ENCODE measurements at regions of chr12 and their contacts with region 1.

Region 1: DNA sequence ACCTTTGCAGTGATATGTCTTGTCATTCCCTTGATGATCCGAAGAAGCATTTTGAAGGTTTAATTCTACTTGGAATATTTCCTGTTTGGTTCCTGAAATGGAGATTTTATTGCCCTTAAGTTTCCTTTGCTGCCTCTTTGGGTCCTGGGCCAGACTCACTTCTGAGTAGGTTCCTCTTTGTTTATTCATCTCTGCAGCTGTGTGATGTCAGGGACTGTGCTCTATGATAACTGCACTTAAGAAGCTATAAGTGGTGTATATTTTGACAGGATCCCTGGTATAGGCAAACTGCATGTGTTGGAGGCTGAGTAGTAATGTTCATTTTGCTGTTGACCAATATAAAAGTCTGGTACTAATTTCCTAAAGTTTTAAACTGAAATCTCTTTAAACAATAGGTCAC is at the start of gene KLRC4:
- DNase-seq: peak in 1 of 2 donors; percentile 34
- ATAC-seq: peak; percentile 42 to 75 (median 61)
- H3K4me3 ChIP-seq: peak within 1 kb of the TSS; percentile 31
- H3K4me3 Mint-ChIP-seq: peak within 1 kb of the TSS; percentile 81
- H3K27ac ChIP-seq: peak within 1 kb of the TSS; percentile 38
- H3K27ac Mint-ChIP-seq: peak within 1 kb of the TSS; percentile 74 to 84
- H3K4me1 ChIP-seq: peaks cover 13% of the 10 kb centered on the region
- H3K4me1 Mint-ChIP-seq: peaks cover 8 to 21% of the 10 kb centered on the region in 2 donors
- H3K27me3 ChIP-seq: no peaks in the 10 kb centered on the region
- H3K27me3 Mint-ChIP-seq: no peaks in the 10 kb centered on the region
- CTCF ChIP-seq: no peak
- total RNA-seq, gene KLRC4: 15.9 to 54.7 (median 51.4) TPM

Region 2: GRCh38 chr12:10372534-10372931 is 36.9 kb before region 1 on chr12:
- intact Hi-C with region 1: loop called (anchors 5 kb)
- DNase-seq: peak in 1 of 2 donors; percentile 35
- ATAC-seq: peak; percentile 60 to 84 (median 82)
- H3K4me3 ChIP-seq: no peak overlapping the region
- H3K4me3 Mint-ChIP-seq: peak overlapping the region; percentile 73
- H3K27ac ChIP-seq: peak overlapping the region; percentile 35
- H3K27ac Mint-ChIP-seq: peak overlapping the region in 1 of 2 donors; percentile 85
- H3K4me1 ChIP-seq: peaks cover 50% of the 10 kb centered on the region
- H3K4me1 Mint-ChIP-seq: peaks cover 58 to 77% of the 10 kb centered on the region in 2 donors
- H3K27me3 ChIP-seq: no peaks in the 10 kb centered on the region
- H3K27me3 Mint-ChIP-seq: no peaks in the 10 kb centered on the region
- CTCF ChIP-seq: no peak

Measured in natural killer cell (primary cell).